CD4-positive, alpha-beta memory T cell (primary cell): ENCODE measurements at regions of chr12 and their contacts with region 1.

Region 1: DNA sequence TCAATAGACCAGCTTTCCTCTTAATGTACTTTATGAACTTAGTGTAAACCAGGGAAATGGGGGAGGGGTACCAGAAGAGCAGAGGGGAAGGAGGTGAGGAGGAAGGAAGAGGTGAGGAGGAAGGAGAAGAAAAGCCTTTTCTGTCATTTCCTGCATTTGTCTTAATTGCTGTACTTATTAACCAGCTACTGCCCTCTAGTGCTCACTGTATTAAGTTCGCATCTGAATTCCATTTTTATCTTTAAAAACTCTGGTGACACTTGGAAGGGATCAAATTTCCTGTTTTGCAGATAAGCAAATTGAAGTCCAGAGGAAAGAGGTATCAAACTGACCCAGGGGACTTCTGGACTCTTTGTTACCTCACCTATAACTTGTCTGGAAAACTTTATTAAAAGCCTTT is 22.2 kb downstream of the MANSC1 start:
- DNase-seq: peak; percentile 37 to 62 (median 56)
- H3K4me3 ChIP-seq: no peak overlapping the region
- H3K4me3 Mint-ChIP-seq: no peak overlapping the region
- H3K27ac ChIP-seq: no peak overlapping the region
- H3K27ac Mint-ChIP-seq: peak overlapping the region in 4 of 7 donors; percentile 25 to 82 (median 51)
- H3K4me1 ChIP-seq: peaks cover 9% of the 10 kb centered on the region
- H3K4me1 Mint-ChIP-seq: peaks cover 7 to 9% (median 9%) of the 10 kb centered on the region in 4 donors
- H3K27me3 ChIP-seq: no peaks in the 10 kb centered on the region
- H3K27me3 Mint-ChIP-seq: no peaks in the 10 kb centered on the region

Region 2: GRCh38 chr12:10771132-10771733 is 1556.6 kb before region 1 on chr12:
- CTCF ChIA-PET with region 1: interaction called, 3 read pairs
- POLR2A ChIA-PET with region 1: no interaction called
- intact Hi-C with region 1: loop called (anchors 5 kb)
- DNase-seq: peak in 4 of 5 donors; percentile 45 to 57 (median 50)
- H3K4me3 ChIP-seq: no peak overlapping the region
- H3K4me3 Mint-ChIP-seq: no peak overlapping the region
- H3K27ac ChIP-seq: no peak overlapping the region
- H3K27ac Mint-ChIP-seq: no peak overlapping the region
- H3K4me1 ChIP-seq: no peaks in the 10 kb centered on the region
- H3K4me1 Mint-ChIP-seq: no peaks in the 10 kb centered on the region
- H3K27me3 ChIP-seq: peaks cover 3% of the 10 kb centered on the region
- H3K27me3 Mint-ChIP-seq: peaks cover 24 to 27% of the 10 kb centered on the region in 2 donors

Region 3: GRCh38 chr12:11553871-11554533 is 773.8 kb before region 1 on chr12:
- CTCF ChIA-PET with region 1: interaction called, 3 read pairs
- POLR2A ChIA-PET with region 1: no interaction called
- intact Hi-C with region 1: loop called (anchors 1 kb)
- DNase-seq: peak; percentile 53 to 68 (median 57)
- H3K4me3 ChIP-seq: no peak overlapping the region
- H3K4me3 Mint-ChIP-seq: peak overlapping the region in 4 of 8 donors; percentile 0 to 57 (median 50)
- H3K27ac ChIP-seq: no peak overlapping the region
- H3K27ac Mint-ChIP-seq: peak overlapping the region in 3 of 7 donors; percentile 2 to 85 (median 17)
- H3K4me1 ChIP-seq: peaks cover 24% of the 10 kb centered on the region
- H3K4me1 Mint-ChIP-seq: peaks cover 19 to 32% (median 23%) of the 10 kb centered on the region in 4 donors
- H3K27me3 ChIP-seq: no peaks in the 10 kb centered on the region
- H3K27me3 Mint-ChIP-seq: no peaks in the 10 kb centered on the region

Region 4: DNA sequence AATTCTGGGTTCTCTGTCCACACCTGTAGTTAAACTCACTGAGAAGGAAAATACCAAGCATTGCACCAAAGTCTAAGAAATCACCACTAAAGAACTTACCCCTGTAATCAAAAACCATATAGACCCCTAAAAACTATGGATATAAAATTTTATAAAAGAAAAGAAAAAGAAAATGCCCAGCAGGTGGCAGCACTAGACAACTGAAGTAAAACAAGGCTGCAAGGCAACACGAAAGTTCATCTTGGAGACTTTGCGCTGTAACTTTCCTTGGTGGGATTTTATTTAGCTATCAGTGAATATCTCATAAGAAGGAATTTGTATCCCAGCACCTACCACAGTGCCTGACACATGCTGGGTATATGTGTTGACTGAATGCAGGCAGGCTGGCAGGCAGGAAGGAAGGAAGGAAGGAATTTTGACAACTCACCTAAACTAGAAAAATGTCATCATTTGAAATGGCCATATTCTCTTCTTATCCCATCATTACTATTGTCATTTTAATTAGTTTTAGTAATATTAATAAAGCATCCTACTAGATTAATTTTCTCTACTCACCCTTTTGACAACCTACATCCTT is 746.5 kb before region 1 on chr12:
- CTCF ChIA-PET with region 1: interaction called, 71 read pairs
- POLR2A ChIA-PET with region 1: interaction called, 4 read pairs
- intact Hi-C with region 1: loop called (anchors 1 kb)
- DNase-seq: peak; percentile 62 to 71 (median 67)
- H3K4me3 ChIP-seq: no peak overlapping the region
- H3K4me3 Mint-ChIP-seq: peak overlapping the region in 1 of 8 donors; percentile 59
- H3K27ac ChIP-seq: no peak overlapping the region
- H3K27ac Mint-ChIP-seq: peak overlapping the region in 1 of 7 donors; percentile 79
- H3K4me1 ChIP-seq: peaks cover 3% of the 10 kb centered on the region
- H3K4me1 Mint-ChIP-seq: peaks cover 0 to 4% (median 3%) of the 10 kb centered on the region in 4 donors
- H3K27me3 ChIP-seq: no peaks in the 10 kb centered on the region
- H3K27me3 Mint-ChIP-seq: peaks cover 2 to 3% of the 10 kb centered on the region in 2 donors

Region 5: GRCh38 chr12:12070674-12071656 is 256.8 kb before region 1 on chr12 and contains the start of gene BCL2L14:
- CTCF ChIA-PET with region 1: interaction called, 5 read pairs
- POLR2A ChIA-PET with region 1: interaction called, 3 read pairs
- intact Hi-C with region 1: loop called (anchors 5 kb)
- DNase-seq: peak in 4 of 5 donors; percentile 17 to 34 (median 24)
- H3K4me3 ChIP-seq: peak within 1 kb of the TSS; percentile 43 to 49
- H3K4me3 Mint-ChIP-seq: peak within 1 kb of the TSS; percentile 74 to 93 (median 84)
- H3K27ac ChIP-seq: peak within 1 kb of the TSS; percentile 39
- H3K27ac Mint-ChIP-seq: peak within 1 kb of the TSS; percentile 56 to 93 (median 81)
- H3K4me1 ChIP-seq: peaks cover 21% of the 10 kb centered on the region
- H3K4me1 Mint-ChIP-seq: peaks cover 11 to 26% (median 20%) of the 10 kb centered on the region in 4 donors
- H3K27me3 ChIP-seq: no peaks in the 10 kb centered on the region
- H3K27me3 Mint-ChIP-seq: no peaks in the 10 kb centered on the region
- total RNA-seq, gene BCL2L14: 1.9 TPM

Region 6: GRCh38 chr12:12266873-12267741 is 60.7 kb before region 1 on chr12 and contains the start of gene LRP6:
- CTCF ChIA-PET with region 1: interaction called, 7 read pairs
- POLR2A ChIA-PET with region 1: no interaction called
- intact Hi-C with region 1: loop called (anchors 2 kb)
- DNase-seq: peak; percentile 55 to 75 (median 67)
- H3K4me3 ChIP-seq: peak within 1 kb of the TSS; percentile 65 to 76
- H3K4me3 Mint-ChIP-seq: peak within 1 kb of the TSS; percentile 85 to 91 (median 90)
- H3K27ac ChIP-seq: peak within 1 kb of the TSS; percentile 32
- H3K27ac Mint-ChIP-seq: peak within 1 kb of the TSS; percentile 46 to 78 (median 70)
- H3K4me1 ChIP-seq: peaks cover 18% of the 10 kb centered on the region
- H3K4me1 Mint-ChIP-seq: peaks cover 12 to 31% (median 21%) of the 10 kb centered on the region in 4 donors
- H3K27me3 ChIP-seq: peaks cover 6% of the 10 kb centered on the region
- H3K27me3 Mint-ChIP-seq: peaks cover 0 to 13% of the 10 kb centered on the region in 2 donors
- total RNA-seq, gene LRP6: 3.9 to 4.0 TPM